MCF 10A (cell line): ENCODE measurements at regions of chr2 and their contacts with region 1.

Region 1: DNA sequence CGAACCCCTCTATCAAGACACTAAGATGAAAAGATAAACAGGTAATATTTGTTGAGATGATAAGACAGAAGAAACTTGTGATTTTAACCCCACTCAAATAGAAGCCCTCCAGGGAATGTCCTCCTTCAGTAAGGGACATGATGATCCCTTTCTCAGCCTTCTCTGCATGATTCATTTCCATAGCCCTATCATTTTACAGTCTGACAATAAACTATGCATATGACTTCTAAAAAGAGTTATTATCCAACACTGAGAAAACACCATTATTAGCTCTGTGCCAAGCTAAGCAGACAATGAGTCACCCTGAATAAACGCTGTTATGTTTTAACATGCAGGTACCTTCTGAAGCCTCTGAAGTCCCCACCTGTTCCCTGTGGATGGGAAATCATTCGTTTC is 54.7 kb downstream of the DTNB start:
- DNase-seq: peak; percentile 87
- H3K4me3 Mint-ChIP-seq: peak overlapping the region; percentile 61
- H3K27ac Mint-ChIP-seq: peak overlapping the region; percentile 85
- H3K4me1 Mint-ChIP-seq: peaks cover 42% of the 10 kb centered on the region
- H3K27me3 Mint-ChIP-seq: no peaks in the 10 kb centered on the region
- CTCF ChIP-seq: no peak

Region 2: DNA sequence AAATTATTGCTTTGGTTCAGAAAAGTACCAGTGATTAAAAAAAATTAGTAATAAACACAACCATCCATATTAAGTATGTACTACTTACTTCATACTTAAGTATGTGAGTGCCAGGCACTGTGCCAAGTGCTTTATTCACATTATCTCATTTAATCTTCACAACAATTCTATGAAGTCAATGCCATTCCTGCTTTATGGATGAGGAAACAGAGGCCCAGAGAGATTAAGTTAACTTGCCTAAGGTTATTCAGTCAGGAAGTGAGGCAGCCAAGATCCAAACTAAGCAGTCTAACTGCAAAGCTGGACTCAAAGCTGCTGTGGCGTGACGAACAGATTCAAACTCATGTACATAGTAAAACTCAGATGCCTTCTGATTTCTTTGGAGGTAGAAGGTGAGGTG is 32.4 kb after region 1 on chr2:
- CTCF ChIA-PET with region 1: interaction called, 3 read pairs
- POLR2A ChIA-PET with region 1: interaction called, 12 read pairs
- intact Hi-C with region 1: no loop called
- DNase-seq: peak; percentile 56
- H3K4me3 Mint-ChIP-seq: no peak overlapping the region
- H3K27ac Mint-ChIP-seq: no peak overlapping the region
- H3K4me1 Mint-ChIP-seq: peaks cover 31% of the 10 kb centered on the region
- H3K27me3 Mint-ChIP-seq: no peaks in the 10 kb centered on the region
- CTCF ChIP-seq: no peak

Region 3: GRCh38 chr2:25664183-25664964 is 45.7 kb after region 1 on chr2:
- CTCF ChIA-PET with region 1: interaction called, 20 read pairs
- POLR2A ChIA-PET with region 1: interaction called, 22 read pairs
- intact Hi-C with region 1: no loop called
- DNase-seq: peak; percentile 88
- H3K4me3 Mint-ChIP-seq: peak overlapping the region; percentile 15
- H3K27ac Mint-ChIP-seq: peak overlapping the region; percentile 50
- H3K4me1 Mint-ChIP-seq: peaks cover 31% of the 10 kb centered on the region
- H3K27me3 Mint-ChIP-seq: no peaks in the 10 kb centered on the region
- CTCF ChIP-seq: peak; percentile 43

Region 4: DNA sequence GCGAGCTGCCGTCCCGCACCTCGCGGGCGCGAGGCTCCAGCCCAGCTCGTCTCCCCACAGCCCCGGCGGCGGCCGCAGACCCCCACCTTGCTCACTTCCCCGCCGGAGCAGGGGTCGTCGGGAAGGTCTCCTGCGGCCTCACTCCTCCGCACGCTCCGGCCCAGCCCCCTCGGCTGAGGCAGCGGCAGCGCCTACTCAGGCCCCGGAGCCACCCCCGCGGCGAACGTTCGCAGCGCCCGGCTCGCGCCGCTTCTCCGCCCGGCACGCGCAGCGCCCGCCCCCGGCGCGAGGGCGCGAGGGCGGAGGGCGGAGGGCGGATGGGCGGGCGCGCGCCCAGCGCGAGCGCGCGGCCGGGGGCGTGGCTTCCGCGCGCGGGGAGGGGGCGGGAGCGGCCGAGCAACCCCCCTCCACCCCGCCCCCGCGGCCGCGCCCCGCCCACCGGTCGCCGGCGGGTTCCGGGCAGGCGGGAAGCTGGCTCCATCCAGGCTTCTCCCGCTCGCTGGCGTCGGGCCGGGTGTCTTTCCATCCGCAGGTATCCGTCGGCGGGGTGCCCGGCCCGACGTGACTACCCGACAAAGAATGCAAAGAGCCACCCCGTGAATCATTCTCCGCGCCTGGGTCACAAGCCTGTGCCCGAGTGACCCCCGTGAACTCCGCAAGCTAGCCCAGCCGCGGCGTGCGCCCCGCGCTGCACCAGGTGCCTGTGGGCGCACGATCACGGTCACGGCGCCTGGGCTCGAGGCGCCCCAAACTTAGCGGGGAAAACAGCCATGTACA is 54.8 kb after region 1 on chr2 and contains the start of gene DTNB:
- CTCF ChIA-PET with region 1: interaction called, 6 read pairs
- POLR2A ChIA-PET with region 1: interaction called, 40 read pairs
- intact Hi-C with region 1: loop called (anchors 2 kb)
- DNase-seq: peak; percentile 80
- H3K4me3 Mint-ChIP-seq: peak within 1 kb of the TSS; percentile 72
- H3K27ac Mint-ChIP-seq: no peak within 1 kb of the TSS
- H3K4me1 Mint-ChIP-seq: peaks cover 8% of the 10 kb centered on the region
- H3K27me3 Mint-ChIP-seq: no peaks in the 10 kb centered on the region
- CTCF ChIP-seq: no peak
- total RNA-seq, gene DTNB: 22.7 and 26.3 TPM in 2 replicates

Region 5: GRCh38 chr2:25690058-25690457 is 71.4 kb after region 1 on chr2:
- CTCF ChIA-PET with region 1: interaction called, 5 read pairs
- POLR2A ChIA-PET with region 1: interaction called, 10 read pairs
- intact Hi-C with region 1: no loop called
- DNase-seq: no peak
- H3K4me3 Mint-ChIP-seq: no peak overlapping the region
- H3K27ac Mint-ChIP-seq: no peak overlapping the region
- H3K4me1 Mint-ChIP-seq: peaks cover 5% of the 10 kb centered on the region
- H3K27me3 Mint-ChIP-seq: no peaks in the 10 kb centered on the region
- CTCF ChIP-seq: no peak

Region 6: DNA sequence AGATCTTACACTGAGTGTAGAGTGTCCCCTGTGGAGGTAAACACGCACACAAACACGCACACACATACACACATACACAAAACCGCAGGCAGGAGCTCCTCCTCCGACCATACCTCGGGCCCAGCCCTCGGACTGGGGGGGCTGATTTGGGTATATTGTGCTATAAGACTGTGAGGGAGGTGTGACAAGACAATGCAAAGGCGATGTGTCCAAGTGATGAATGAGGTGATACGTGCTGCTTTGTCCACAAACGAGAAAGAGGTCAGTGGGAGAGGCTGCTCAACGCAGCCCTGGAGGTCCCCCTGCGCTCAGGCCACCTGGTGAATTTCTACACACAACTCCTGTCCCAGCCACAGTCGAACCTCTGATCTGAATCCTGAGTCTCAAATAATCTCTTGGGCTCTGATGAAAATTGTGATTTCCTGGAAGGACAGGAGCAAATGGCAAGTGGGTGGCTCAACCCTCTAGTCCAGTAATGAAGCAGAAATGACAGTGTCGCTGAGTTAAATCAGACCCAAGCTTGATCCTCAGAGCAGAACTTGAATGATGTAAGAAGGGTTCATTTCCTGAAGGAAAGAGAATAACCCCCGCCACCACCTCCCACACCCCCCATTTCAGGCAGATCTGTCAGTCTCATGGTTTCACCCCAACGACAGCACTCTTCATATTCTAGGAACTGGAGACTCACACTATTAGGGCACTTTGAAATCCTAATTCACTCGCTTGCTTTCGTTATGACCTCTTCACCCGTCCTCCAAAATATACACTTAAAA is 308.5 kb after region 1 on chr2:
- CTCF ChIA-PET with region 1: no interaction called
- POLR2A ChIA-PET with region 1: no interaction called
- intact Hi-C with region 1: no loop called
- DNase-seq: no peak
- H3K4me3 Mint-ChIP-seq: no peak overlapping the region
- H3K27ac Mint-ChIP-seq: no peak overlapping the region
- H3K4me1 Mint-ChIP-seq: no peaks in the 10 kb centered on the region
- H3K27me3 Mint-ChIP-seq: no peaks in the 10 kb centered on the region
- CTCF ChIP-seq: no peak